Activated CD4-positive, alpha-beta memory T cell treated with anti-CD3 and anti-CD28 coated beads for 36 hours (primary cell): ENCODE measurements at regions of chr21 and their contacts with region 1.

Region 1: DNA sequence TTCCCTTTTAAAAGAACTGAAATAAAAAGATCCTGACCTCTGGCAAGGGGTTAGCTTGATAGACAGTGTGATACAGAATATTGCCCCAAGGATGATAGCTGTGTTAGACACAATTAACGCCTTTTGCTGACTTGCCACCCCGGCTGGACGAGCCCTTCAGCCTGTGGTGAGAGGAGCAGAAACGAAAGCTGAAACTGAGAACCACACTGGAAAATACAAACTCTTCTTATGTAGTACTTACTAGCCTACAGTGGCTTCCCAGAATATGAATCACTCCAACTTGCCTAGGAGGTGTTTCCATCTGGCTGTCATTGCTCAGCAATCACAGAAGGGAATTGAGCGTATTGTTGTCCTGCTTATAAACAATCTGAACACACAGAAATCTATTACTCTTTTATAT is 22.9 kb downstream of the SAMSN1 start:
- DNase-seq: peak; percentile 71
- H3K4me3 Mint-ChIP-seq: peak overlapping the region; percentile 59
- H3K27ac Mint-ChIP-seq: peak overlapping the region; percentile 72
- H3K4me1 Mint-ChIP-seq: peaks cover 65% of the 10 kb centered on the region
- H3K27me3 Mint-ChIP-seq: no peaks in the 10 kb centered on the region

Region 2: GRCh38 chr21:14376851-14377250 is 146.4 kb before region 1 on chr21:
- CTCF ChIA-PET with region 1: no interaction called
- POLR2A ChIA-PET with region 1: no interaction called
- intact Hi-C with region 1: no loop called
- DNase-seq: no peak
- H3K4me3 Mint-ChIP-seq: no peak overlapping the region
- H3K27ac Mint-ChIP-seq: no peak overlapping the region
- H3K4me1 Mint-ChIP-seq: peaks cover 22% of the 10 kb centered on the region
- H3K27me3 Mint-ChIP-seq: no peaks in the 10 kb centered on the region

Region 3: DNA sequence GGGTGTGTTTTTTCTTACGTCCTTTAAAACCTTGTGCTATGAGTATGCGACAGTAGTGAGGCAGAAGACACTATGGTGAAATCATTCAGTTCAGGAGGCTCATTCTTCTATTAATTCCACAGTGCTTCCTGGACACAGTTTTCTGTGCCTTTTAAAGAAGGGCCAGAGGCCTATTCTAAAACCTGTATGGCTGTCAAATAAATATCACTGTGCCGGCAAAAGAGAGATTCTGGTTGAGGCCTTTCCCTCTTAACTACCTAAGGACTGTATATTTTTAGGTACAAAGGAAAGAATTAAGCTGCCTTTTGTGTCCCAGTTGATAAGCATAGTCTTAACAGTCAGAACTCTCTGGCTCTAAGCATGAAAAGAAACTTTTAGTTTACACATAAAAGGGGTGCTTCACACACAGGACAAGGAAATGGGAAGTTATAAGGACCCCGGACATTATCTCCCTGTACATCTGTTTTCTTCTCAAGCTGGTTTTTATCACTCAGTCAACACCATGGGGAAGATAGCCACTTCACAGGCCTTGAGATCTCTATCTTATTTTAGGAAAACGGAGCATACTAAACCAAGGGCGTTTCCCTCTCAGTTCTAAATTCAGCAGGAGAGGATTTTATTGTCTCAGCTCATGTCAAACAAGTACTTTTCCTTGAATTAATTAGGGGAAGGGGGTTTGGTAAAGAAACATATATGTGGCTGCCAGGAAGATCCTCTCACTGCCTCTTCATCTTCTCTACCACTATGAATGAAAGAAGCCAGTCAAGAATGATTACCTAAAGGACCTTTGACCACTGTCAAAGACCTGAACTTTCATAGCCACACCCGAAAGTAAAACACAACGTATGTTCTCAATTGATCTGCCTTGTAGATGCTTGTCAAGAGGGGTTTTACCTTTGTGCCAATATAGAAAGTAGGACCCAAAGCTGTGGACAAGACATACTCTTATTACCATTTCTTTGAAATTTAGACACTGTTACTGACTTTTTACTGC is 68.9 kb before region 1 on chr21:
- CTCF ChIA-PET with region 1: interaction called, 3 read pairs
- POLR2A ChIA-PET with region 1: interaction called, 4 read pairs
- intact Hi-C with region 1: loop called (anchors 1 kb)
- DNase-seq: no peak
- H3K4me3 Mint-ChIP-seq: no peak overlapping the region
- H3K27ac Mint-ChIP-seq: peak overlapping the region; percentile 74
- H3K4me1 Mint-ChIP-seq: peaks cover 42% of the 10 kb centered on the region
- H3K27me3 Mint-ChIP-seq: no peaks in the 10 kb centered on the region

Region 4: GRCh38 chr21:14487490-14488432 is 35.5 kb before region 1 on chr21:
- CTCF ChIA-PET with region 1: interaction called, 3 read pairs
- POLR2A ChIA-PET with region 1: interaction called, 3 read pairs
- intact Hi-C with region 1: loop called (anchors 1 kb)
- DNase-seq: no peak
- H3K4me3 Mint-ChIP-seq: no peak overlapping the region
- H3K27ac Mint-ChIP-seq: peak overlapping the region; percentile 75
- H3K4me1 Mint-ChIP-seq: peaks cover 59% of the 10 kb centered on the region
- H3K27me3 Mint-ChIP-seq: no peaks in the 10 kb centered on the region

Region 5: DNA sequence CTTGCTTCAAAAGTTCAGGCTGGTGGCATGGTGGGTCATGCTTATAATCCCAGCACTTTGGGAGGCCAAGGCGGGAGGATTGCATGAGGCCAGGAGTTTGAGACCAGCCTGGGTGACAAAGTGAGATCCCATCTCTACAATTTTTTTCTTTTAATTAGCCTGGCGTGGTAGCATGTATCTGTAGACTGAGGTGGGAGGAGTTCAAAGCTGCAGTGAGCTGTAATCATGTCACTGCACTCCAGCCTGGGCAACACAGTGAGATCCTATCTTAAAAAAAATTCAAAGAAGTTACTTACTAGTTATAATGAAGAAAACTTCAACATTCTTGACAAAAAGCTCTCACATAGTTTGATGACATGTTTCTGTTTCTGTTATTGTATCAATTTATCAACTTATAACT is 22.4 kb before region 1 on chr21:
- CTCF ChIA-PET with region 1: no interaction called
- POLR2A ChIA-PET with region 1: interaction called, 3 read pairs
- intact Hi-C with region 1: loop called (anchors 2 kb)
- DNase-seq: no peak
- H3K4me3 Mint-ChIP-seq: no peak overlapping the region
- H3K27ac Mint-ChIP-seq: no peak overlapping the region
- H3K4me1 Mint-ChIP-seq: peaks cover 23% of the 10 kb centered on the region
- H3K27me3 Mint-ChIP-seq: no peaks in the 10 kb centered on the region

Region 6: DNA sequence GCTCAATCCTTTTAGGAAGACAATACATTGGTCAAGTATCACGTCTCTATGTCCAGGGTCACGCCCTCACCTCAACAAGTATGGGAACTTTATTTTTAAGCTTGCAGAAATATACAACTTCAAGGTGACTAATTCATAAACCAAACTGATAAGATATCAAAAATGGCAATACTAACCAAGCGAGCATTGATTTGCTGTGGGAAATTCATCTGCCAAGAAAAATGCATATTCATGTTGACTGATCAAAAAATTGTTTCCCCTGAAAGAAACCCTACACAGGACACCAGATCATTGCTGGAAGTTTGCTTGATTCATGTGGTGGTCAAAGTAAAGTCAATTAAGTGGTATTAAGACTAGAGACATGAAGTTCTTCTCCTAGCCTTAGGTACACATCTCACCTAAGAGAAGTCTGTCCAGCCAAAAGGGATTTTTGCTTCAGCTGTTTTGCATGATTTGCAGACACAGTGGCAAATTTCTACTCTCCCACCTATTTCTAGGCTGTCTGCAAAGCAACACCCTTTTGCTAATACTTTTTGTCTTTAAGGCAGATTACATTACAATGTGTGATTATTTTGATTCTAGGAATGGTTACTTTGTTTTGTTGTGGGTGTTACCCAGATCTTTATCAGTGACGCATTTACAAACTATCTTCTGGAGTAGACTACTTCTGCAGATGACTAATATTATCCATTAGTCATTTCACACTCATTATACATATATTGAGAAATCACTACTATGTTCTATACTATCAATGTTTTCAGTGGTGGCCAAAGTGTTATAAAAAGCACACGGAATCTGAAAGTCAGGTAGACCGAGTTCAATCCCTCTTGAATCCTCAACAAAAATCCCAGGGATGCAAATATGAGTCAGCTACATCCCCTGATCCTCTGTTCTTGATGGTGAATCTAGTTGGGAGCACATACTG is 10.5 kb after region 1 on chr21:
- CTCF ChIA-PET with region 1: no interaction called
- POLR2A ChIA-PET with region 1: interaction called, 28 read pairs
- intact Hi-C with region 1: loop called (anchors 1 kb)
- DNase-seq: peak; percentile 29
- H3K4me3 Mint-ChIP-seq: peak overlapping the region; percentile 95
- H3K27ac Mint-ChIP-seq: peak overlapping the region; percentile 100
- H3K4me1 Mint-ChIP-seq: peaks cover 82% of the 10 kb centered on the region
- H3K27me3 Mint-ChIP-seq: peaks cover 2% of the 10 kb centered on the region

Region 7: DNA sequence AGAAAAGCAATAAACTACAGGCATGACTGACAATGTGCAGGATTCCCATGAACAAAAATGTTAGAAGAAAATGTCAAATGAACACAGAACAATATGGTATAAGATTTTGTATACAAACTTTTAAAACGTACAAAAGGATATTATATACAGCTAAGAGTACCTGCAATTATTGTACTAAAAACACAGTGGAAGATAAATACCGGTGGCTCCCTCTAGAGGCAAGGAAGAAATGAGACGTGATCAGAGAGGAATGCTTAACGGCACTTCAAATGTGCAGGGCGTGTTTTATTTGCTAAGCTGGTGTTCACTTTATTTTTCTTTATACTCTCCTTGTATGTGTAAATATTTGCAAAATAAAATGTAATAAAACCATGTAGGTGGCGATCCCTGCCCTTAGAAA is 214.7 kb after region 1 on chr21:
- CTCF ChIA-PET with region 1: interaction called, 23 read pairs
- POLR2A ChIA-PET with region 1: no interaction called
- intact Hi-C with region 1: loop called (anchors 2 kb)
- DNase-seq: peak; percentile 38
- H3K4me3 Mint-ChIP-seq: no peak overlapping the region
- H3K27ac Mint-ChIP-seq: no peak overlapping the region
- H3K4me1 Mint-ChIP-seq: peaks cover 31% of the 10 kb centered on the region
- H3K27me3 Mint-ChIP-seq: no peaks in the 10 kb centered on the region